GM12878 (cell line): ENCODE measurements at regions of chr2 and their contacts with region 1.

Region 1: GRCh38 chr2:25606892-25607291 is 66.5 kb downstream of the DTNB start:
- DNase-seq: no peak
- ATAC-seq: 0 out of 3 replicates have a peak, but pooled peaks have one; percentile 29
- H3K4me3 ChIP-seq: no peak overlapping the region
- H3K27ac ChIP-seq: no peak overlapping the region
- H3K4me1 ChIP-seq: peaks cover 8% of the 10 kb centered on the region
- H3K27me3 ChIP-seq: no peaks in the 10 kb centered on the region
- CTCF ChIP-seq: peak; percentile 44 to 74 (median 51)
- EP300 ChIP-seq: no peak
- POLR2A ChIP-seq: no peak
- RAD21 ChIP-seq: peak; percentile 83

Region 2: GRCh38 chr2:25586726-25587144 is 20.2 kb before region 1 on chr2:
- CTCF ChIA-PET with region 1: interaction called, 18 read pairs
- POLR2A ChIA-PET with region 1: interaction called, 4 read pairs
- RAD21 ChIA-PET with region 1: interaction called, 10 read pairs
- SMC1A ChIA-PET with region 1: interaction called, 19 read pairs
- in situ Hi-C with region 1: no loop called
- intact Hi-C with region 1: no loop called
- DNase-seq: peak; percentile 92
- ATAC-seq: peak; percentile 93
- H3K4me3 ChIP-seq: no peak overlapping the region
- H3K27ac ChIP-seq: peak overlapping the region; percentile 41; the same call in 1 of the 2 replicates
- H3K4me1 ChIP-seq: peaks cover 38% of the 10 kb centered on the region
- H3K27me3 ChIP-seq: no peaks in the 10 kb centered on the region
- CTCF ChIP-seq: no peak
- EP300 ChIP-seq: peak; percentile 90 to 91
- POLR2A ChIP-seq: 0 out of 2 replicates have a peak, but pooled peaks have one; percentile 20
- RAD21 ChIP-seq: no peak; the same call in 1 of the 2 replicates

Region 3: GRCh38 chr2:25651071-25651470 is 44.2 kb after region 1 on chr2:
- CTCF ChIA-PET with region 1: interaction called, 11 read pairs
- POLR2A ChIA-PET with region 1: no interaction called
- RAD21 ChIA-PET with region 1: no interaction called
- SMC1A ChIA-PET with region 1: interaction called, 3 read pairs
- in situ Hi-C with region 1: no loop called
- intact Hi-C with region 1: no loop called
- DNase-seq: no peak
- ATAC-seq: no peak
- H3K4me3 ChIP-seq: no peak overlapping the region
- H3K27ac ChIP-seq: no peak overlapping the region
- H3K4me1 ChIP-seq: no peaks in the 10 kb centered on the region
- H3K27me3 ChIP-seq: no peaks in the 10 kb centered on the region
- CTCF ChIP-seq: no peak
- EP300 ChIP-seq: no peak
- POLR2A ChIP-seq: no peak
- RAD21 ChIP-seq: no peak

Region 4: GRCh38 chr2:25690058-25690457 is 83.2 kb after region 1 on chr2:
- CTCF ChIA-PET with region 1: interaction called, 12 read pairs
- POLR2A ChIA-PET with region 1: no interaction called
- RAD21 ChIA-PET with region 1: no interaction called
- SMC1A ChIA-PET with region 1: interaction called, 3 read pairs
- in situ Hi-C with region 1: no loop called
- intact Hi-C with region 1: no loop called
- DNase-seq: no peak
- ATAC-seq: no peak
- H3K4me3 ChIP-seq: no peak overlapping the region
- H3K27ac ChIP-seq: no peak overlapping the region
- H3K4me1 ChIP-seq: no peaks in the 10 kb centered on the region
- H3K27me3 ChIP-seq: no peaks in the 10 kb centered on the region
- CTCF ChIP-seq: no peak
- EP300 ChIP-seq: no peak
- POLR2A ChIP-seq: no peak
- RAD21 ChIP-seq: no peak

Region 5: DNA sequence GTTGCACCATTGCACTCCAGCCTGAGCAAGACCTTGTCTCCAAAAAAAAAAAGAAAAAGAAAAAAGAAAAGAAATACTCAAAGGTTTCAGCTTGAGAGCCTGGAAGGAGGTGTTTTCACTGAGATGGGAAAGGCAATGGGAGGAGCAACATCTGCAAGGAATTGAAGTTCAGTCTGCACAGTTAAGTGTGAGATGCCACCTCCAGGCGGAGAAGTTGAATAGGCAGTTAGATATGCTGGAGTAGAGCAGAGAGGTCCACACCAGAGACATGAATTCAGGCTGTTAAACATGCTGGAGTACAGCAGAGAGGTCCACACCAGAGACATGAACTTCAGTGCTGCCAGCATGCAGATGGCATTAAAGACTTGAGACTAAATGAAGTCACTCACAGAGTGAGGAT is 107.8 kb after region 1 on chr2:
- CTCF ChIA-PET with region 1: interaction called, 23 read pairs
- POLR2A ChIA-PET with region 1: no interaction called
- RAD21 ChIA-PET with region 1: interaction called, 4 read pairs
- SMC1A ChIA-PET with region 1: interaction called, 18 read pairs
- in situ Hi-C with region 1: no loop called
- intact Hi-C with region 1: no loop called
- DNase-seq: no peak
- ATAC-seq: 0 out of 3 replicates have a peak, but pooled peaks have one; percentile 27
- H3K4me3 ChIP-seq: no peak overlapping the region
- H3K27ac ChIP-seq: no peak overlapping the region
- H3K4me1 ChIP-seq: no peaks in the 10 kb centered on the region
- H3K27me3 ChIP-seq: no peaks in the 10 kb centered on the region
- CTCF ChIP-seq: peak; percentile 10 to 16 (median 11); a peak in 4 of 6 replicates
- EP300 ChIP-seq: no peak
- POLR2A ChIP-seq: no peak
- RAD21 ChIP-seq: peak; percentile 39; the same call in 1 of the 2 replicates

Region 6: GRCh38 chr2:25951071-25951547 is 344.2 kb after region 1 on chr2:
- CTCF ChIA-PET with region 1: interaction called, 8 read pairs
- POLR2A ChIA-PET with region 1: no interaction called
- RAD21 ChIA-PET with region 1: interaction called, 7 read pairs
- SMC1A ChIA-PET with region 1: interaction called, 11 read pairs
- in situ Hi-C with region 1: no loop called
- intact Hi-C with region 1: no loop called
- DNase-seq: peak; percentile 24
- ATAC-seq: peak; percentile 99
- H3K4me3 ChIP-seq: no peak overlapping the region
- H3K27ac ChIP-seq: no peak overlapping the region
- H3K4me1 ChIP-seq: no peaks in the 10 kb centered on the region
- H3K27me3 ChIP-seq: no peaks in the 10 kb centered on the region
- CTCF ChIP-seq: peak; percentile 95 to 96 (median 95)
- EP300 ChIP-seq: no peak
- POLR2A ChIP-seq: no peak
- RAD21 ChIP-seq: peak; percentile 93